Right ventricle myocardium inferior (tissue), 1 donor: ENCODE measurements at regions of chr22 and their contacts with region 1.

Region 1: DNA sequence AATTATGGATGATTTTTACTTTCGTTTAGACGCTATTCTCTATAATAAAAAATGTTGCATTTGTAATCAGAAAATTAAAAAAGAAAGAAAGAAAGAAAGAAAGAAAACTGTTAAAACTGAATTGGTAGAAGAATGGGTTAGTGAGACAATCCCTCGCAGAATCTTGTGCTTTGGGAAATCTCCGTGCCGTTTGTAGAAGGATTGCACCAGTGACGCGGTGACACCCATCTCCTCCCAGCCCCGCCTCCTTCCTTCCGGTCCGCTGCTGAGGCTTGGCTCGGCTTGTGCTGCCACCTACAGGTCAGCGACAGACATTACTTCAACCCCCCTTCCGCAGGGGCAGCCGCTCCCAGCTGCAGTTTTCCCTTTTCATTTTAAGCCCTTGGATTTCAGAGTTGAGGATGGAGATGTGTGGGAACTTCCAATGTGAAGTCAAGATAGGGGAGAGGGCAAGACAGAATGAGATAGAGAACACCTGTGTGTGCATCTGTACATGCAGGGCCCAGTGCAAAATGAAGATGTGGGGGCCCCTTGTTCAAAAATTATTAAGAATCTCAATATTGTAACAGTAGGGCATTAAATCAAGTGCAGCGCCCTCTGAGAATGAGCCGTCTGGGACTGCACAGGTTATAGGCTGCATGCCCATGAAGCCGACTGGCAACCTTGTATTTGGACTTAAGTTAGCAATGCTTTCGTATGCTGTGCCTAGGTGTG is 41.1 kb downstream of the TST start:
- DNase-seq: peak; percentile 96
- ATAC-seq: peak; percentile 95

Region 2: DNA sequence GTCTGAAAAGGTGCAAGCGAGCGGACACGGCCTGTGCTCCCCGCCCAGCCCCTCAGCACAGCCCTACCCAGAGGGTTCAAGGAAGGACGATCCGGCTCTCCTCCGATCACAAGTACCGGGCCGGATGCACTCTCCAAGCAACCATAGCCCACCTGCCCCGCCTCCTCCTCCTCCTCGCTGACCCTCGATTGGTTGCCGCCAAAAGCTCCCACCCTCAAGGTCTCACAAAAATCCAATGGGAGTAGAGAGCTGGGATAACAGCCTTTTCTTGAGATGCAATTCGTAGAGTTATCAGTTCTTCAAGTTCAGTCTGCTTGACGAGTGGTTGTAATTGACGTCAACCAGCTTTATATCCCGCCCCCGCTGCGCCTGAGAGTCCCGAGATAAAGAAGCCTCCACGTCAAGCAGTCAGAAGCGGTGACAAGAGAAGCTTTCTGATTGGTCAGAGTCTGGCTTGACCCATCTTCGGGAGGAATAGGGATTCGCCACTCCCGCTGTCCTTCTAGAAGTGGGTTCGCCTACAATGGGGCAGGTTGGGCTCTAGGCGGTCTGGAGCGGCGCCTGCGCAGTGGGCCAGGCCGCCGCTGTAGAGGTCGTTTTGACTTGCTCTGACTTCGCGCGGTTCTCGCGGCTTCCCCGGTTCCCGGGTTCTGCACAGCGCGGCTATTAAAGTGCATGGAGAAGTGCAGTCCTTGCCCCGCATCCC is 202.0 kb before region 1 on chr22 and contains the start of gene IFT27:
- intact Hi-C with region 1: loop called (anchors 5 kb)
- DNase-seq: peak; percentile 97
- ATAC-seq: peak; percentile 99
- total RNA-seq, gene IFT27: 28.3 TPM

Region 3: DNA sequence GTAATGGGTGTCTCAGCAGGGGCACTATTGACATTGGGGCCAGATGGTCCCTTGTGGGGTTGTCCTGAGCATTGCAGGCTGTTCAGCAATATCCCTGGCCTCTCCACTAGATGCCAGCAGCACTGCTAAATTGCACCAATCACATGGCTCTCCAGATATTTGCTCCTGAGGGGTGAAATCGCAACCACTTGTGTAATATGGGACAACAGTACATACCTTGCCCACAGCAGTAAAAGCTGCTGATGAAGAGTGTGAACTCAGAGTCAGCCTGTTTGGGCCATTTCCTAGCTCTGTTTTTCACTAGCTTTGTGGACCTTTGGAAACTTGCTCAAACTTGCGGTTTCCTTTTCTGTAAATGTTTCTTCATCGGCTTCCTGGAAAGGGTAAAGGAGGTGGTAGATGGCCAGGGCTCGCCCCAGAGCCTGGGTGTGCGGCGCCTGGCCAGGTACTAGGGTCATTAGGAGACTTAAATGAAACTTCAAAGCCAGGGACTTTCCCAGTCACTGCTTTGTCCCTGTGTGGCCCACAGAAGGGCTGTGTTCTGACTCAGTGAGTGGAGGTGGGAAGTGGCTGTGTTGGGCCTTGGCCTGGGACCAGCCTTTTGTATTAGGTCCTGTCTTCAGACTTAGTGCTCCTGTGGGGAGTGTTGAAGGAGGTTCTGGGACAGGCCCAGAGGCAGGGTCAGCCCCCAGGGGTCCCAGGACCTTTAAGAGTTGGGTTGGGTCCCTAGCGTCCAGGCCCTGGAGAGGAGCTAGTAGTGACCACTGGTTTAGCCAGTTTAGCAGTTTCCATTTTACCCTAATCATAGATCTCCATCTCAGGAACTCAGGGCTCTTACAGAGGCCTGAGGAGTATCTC is 104.2 kb before region 1 on chr22:
- intact Hi-C with region 1: loop called (anchors 5 kb)
- DNase-seq: peak; percentile 83
- ATAC-seq: peak; percentile 80